ENCODE measurements at regions of chr1 and their contacts with region 1.

Region 1: GRCh38 chr1:48109390-48110013 is 112.3 kb upstream of the TRABD2B start:
- DNase-seq: peak; percentile 36
- H3K4me3 ChIP-seq: no peak overlapping the region
- H3K27ac ChIP-seq: no peak overlapping the region
- H3K4me1 ChIP-seq: no peaks in the 10 kb centered on the region
- H3K27me3 ChIP-seq: no peaks in the 10 kb centered on the region; the same call in 1 of the 2 replicates
- CTCF ChIP-seq: peak; percentile 86
- EP300 ChIP-seq: no peak
- RAD21 ChIP-seq: peak; percentile 93

Region 2: GRCh38 chr1:47696740-47697441 is 412.6 kb before region 1 on chr1:
- CTCF ChIA-PET with region 1: no interaction called
- POLR2A ChIA-PET with region 1: no interaction called
- DNase-seq: no peak
- H3K4me3 ChIP-seq: no peak overlapping the region
- H3K27ac ChIP-seq: no peak overlapping the region
- H3K4me1 ChIP-seq: no peaks in the 10 kb centered on the region
- H3K27me3 ChIP-seq: peaks cover 15% of the 10 kb centered on the region; the same call in 1 of the 2 replicates
- CTCF ChIP-seq: no peak
- EP300 ChIP-seq: no peak
- RAD21 ChIP-seq: no peak

Region 3: DNA sequence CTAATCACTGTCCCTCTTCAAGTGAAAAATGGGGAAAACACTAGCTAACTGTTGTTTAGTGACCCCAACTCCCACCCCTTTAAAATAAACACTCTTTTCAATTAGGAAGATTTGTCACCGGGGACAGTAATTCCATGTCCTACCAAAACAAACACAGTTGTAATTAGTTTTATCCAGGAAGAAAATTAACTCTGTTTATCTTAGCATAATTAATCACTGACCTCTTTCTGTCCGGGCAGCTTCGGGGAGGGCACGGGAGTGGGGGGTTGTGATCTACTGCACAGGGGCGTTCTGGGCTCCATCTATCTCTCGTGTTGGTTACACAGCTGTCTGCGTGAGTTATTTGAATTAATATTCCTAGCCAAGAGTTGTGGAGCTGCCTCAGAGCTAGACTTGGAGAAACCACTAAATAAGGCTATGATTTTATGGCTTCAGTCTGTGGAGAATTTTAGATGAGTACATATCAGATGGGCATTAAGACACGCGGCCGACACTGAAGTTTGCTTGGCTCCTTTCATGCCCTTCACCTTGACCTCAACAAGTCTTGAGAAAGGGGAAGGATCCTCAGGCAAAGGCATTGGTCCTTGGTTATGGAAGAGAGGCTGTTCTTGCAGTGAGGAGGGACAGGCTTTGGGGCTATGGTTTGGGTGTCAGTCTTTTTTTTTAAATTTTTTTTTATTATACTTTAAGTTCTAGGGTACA is 10.3 kb before region 1 on chr1:
- CTCF ChIA-PET with region 1: interaction called, 23 read pairs
- POLR2A ChIA-PET with region 1: no interaction called
- DNase-seq: no peak
- H3K4me3 ChIP-seq: no peak overlapping the region
- H3K27ac ChIP-seq: no peak overlapping the region
- H3K4me1 ChIP-seq: peaks cover 0 to under 1% of the 10 kb centered on the region in 2 experiments; a peak in 1 of 4 replicates
- H3K27me3 ChIP-seq: peaks cover 5% of the 10 kb centered on the region
- CTCF ChIP-seq: no peak
- EP300 ChIP-seq: no peak
- RAD21 ChIP-seq: no peak

Region 4: GRCh38 chr1:48196237-48196636 is 86.7 kb after region 1 on chr1:
- CTCF ChIA-PET with region 1: interaction called, 191 read pairs
- POLR2A ChIA-PET with region 1: no interaction called
- DNase-seq: no peak
- H3K4me3 ChIP-seq: no peak overlapping the region
- H3K27ac ChIP-seq: no peak overlapping the region
- H3K4me1 ChIP-seq: no peaks in the 10 kb centered on the region; a peak in 1 of 4 replicates
- H3K27me3 ChIP-seq: peaks cover 4% of the 10 kb centered on the region; the same call in 1 of the 2 replicates
- CTCF ChIP-seq: no peak
- EP300 ChIP-seq: no peak
- RAD21 ChIP-seq: no peak

Region 5: DNA sequence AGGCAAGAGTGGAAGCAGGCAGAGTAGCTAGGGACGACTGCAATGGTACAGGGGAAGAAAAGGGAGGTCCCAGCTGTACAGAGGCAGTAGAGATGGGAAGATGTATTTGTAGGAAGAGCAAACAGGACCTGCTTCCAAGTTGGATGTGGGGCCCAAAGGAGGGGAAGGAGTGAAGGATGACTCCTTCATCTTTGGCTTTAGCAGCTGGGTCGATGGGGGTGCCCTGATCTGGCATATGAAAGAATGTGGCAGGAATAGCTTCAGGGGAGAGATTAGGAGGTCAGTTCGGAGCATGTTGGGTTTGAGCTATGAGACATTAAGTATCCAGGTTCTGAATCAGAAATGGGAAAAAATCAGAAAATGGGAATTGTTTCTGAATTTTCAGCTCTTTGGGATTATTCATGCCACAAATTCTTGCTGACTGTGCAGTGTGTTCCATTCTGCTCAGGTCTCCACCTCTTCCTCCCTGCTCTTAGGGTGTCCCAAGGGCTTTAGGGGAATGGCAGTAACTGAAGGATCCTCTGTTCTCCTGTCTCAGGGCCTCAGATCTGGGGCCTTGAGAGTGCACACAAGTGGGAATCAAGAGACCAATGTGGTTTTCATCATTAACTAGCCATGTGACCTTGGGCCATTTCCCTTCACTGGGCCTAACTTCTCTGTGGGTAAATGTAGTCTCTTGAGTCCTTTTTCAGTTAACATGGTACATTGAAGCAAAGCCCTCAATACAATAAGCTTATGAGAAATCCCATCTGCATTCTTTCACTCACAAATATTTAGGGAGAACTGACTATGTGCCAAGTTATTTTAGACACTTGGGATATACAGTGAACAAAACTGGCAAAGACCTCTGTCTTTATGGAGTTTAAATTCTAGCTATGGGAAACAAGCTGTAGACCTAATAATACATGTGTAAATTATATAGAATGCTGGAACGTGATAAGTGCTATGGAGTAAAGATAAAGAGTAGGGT is 438.0 kb after region 1 on chr1:
- CTCF ChIA-PET with region 1: no interaction called
- POLR2A ChIA-PET with region 1: no interaction called
- DNase-seq: no peak
- H3K4me3 ChIP-seq: no peak overlapping the region
- H3K27ac ChIP-seq: no peak overlapping the region
- H3K4me1 ChIP-seq: no peaks in the 10 kb centered on the region
- H3K27me3 ChIP-seq: no peaks in the 10 kb centered on the region
- CTCF ChIP-seq: no peak
- EP300 ChIP-seq: no peak
- RAD21 ChIP-seq: no peak

Measured in SK-N-SH (cell line).